Motor neuron (in vitro differentiated cells): ENCODE measurements at regions of chr10 and their contacts with region 1.

Region 1: DNA sequence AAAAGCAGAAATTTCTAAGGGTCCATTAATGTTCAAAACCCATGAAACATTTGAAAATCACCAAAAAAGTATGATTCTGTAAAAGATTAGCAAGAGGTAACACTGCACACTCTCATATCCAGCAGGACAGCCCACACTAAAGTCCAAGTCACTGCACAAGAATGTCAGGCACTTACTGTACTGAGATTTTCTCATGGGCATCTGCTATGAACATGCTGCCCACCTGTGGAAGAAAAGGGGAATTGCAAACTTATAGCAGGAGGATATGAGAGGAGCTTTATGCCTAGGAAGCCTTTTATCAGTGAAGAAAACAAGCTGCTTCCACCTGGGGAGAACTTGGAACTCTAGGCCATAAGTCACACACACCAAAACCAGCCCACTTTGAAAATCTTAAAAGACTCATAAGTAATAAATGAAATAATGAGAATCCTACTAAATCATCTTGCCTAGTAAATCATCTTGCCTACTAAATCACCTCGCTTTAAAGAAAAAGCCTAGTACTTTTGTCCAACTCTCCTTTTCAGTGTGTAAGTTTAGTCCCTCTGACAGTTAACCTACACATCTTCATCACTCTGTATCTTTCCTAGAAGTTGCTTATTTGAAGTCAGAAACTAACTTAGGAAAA is 46.1 kb downstream of the ARMH3 start:
- ATAC-seq: peak; percentile 80 to 99 (median 96)
- H3K4me3 ChIP-seq: no peak overlapping the region
- H3K27ac ChIP-seq: no peak overlapping the region
- H3K4me1 ChIP-seq: no peaks in the 10 kb centered on the region

Region 2: DNA sequence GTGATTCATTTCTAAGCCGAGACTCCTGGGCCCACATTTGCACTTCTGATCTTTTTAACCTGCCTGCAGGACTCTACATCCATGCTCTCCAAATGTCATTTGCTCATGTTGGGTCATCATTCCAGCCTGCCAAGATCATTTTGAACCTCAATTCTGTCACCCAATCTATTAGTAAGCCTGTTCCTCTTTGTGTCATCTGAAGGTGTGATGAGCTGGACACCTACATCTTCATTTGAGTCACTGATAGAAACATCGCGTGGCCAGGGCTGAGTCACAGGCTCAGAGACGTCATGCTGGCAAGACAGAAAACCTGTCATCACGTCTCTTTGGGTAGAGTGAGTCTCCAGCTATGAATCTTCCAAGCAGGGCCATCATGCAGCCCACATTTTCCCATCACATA is 1162.5 kb before region 1 on chr10:
- in situ Hi-C with region 1: no loop called
- ATAC-seq: peak in 6 of 8 experiments; percentile 43 to 97 (median 70)
- H3K4me3 ChIP-seq: no peak overlapping the region
- H3K27ac ChIP-seq: no peak overlapping the region
- H3K4me1 ChIP-seq: no peaks in the 10 kb centered on the region

Region 3: GRCh38 chr10:100945754-100946153 is 1064.2 kb before region 1 on chr10:
- in situ Hi-C with region 1: no loop called
- ATAC-seq: no peak
- H3K4me3 ChIP-seq: no peak overlapping the region
- H3K27ac ChIP-seq: no peak overlapping the region
- H3K4me1 ChIP-seq: no peaks in the 10 kb centered on the region

Region 4: GRCh38 chr10:101840741-101841453 is 169.0 kb before region 1 on chr10:
- in situ Hi-C with region 1: loop called in 4 of 9 experiments (anchors 25 kb)
- ATAC-seq: peak; percentile 71 to 88 (median 83)
- H3K4me3 ChIP-seq: peak overlapping the region in 4 of 5 donors; percentile 5 to 33 (median 29)
- H3K27ac ChIP-seq: no peak overlapping the region
- H3K4me1 ChIP-seq: peaks cover 36 to 47% of the 10 kb centered on the region in 2 donors

Region 5: GRCh38 chr10:101889256-101890210 is 120.4 kb before region 1 on chr10:
- in situ Hi-C with region 1: loop called in 3 of 9 experiments (anchors 25 kb)
- ATAC-seq: peak in 7 of 8 experiments; percentile 42 to 89 (median 85)
- H3K4me3 ChIP-seq: no peak overlapping the region
- H3K27ac ChIP-seq: no peak overlapping the region
- H3K4me1 ChIP-seq: peaks cover 5 to 13% of the 10 kb centered on the region in 2 donors

Region 6: GRCh38 chr10:102322914-102323313 is 313.0 kb after region 1 on chr10:
- in situ Hi-C with region 1: no loop called
- ATAC-seq: no peak
- H3K4me3 ChIP-seq: no peak overlapping the region
- H3K27ac ChIP-seq: no peak overlapping the region
- H3K4me1 ChIP-seq: no peaks in the 10 kb centered on the region